MCF 10A (cell line): ENCODE measurements at regions of chr5 and their contacts with region 1.

Region 1: GRCh38 chr5:42950440-42951292 is 89.5 kb downstream of the ANXA2R start:
- DNase-seq: peak; percentile 98
- H3K4me3 Mint-ChIP-seq: peak overlapping the region; percentile 47
- H3K27ac Mint-ChIP-seq: peak overlapping the region; percentile 85
- H3K4me1 Mint-ChIP-seq: no peaks in the 10 kb centered on the region
- H3K27me3 Mint-ChIP-seq: no peaks in the 10 kb centered on the region
- CTCF ChIP-seq: no peak

Region 2: DNA sequence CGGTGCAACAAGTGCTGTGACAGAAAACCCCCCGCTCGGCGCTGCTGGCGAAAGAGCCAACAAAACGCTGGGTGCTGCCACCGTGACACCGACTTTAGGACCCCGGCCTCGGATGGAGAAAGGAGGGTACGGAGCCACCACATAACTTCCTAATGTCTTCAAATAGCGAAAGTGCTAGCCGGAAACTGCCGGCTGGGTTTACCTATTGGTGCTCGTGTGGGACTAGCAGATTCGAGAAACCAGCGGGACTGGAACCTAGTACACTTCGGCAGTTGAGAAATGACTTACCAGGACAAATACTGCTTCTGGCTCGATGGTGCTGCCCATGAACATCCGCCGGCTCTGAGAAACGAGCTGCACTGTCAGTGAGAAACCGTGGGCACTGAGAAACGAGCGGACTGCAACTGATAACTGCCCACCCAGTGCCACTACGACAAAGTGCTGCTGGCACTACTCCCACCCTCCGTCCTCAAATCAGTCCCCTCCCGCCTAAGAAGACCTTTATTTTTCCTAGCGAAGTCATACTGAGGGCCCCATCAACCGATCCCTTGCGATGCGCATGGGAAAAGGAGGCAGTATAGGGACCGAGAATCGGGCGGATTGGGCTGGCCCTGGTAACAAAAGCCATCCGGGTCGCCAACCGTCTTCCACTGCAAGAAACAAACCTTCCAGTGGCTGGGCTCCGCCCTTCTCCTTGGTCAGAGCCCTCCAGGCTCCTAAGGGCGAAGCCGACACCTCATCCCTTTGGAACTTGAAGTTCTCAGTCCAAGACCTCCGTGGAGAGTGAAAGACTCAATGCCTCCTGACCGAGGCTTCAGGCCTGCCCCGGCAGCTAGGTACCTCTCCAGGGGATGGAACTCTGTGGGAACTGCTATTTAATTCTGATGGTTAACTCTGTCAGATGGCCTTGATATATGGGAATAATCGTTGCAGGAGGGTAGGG is 116.4 kb after region 1 on chr5:
- CTCF ChIA-PET with region 1: interaction called, 3 read pairs
- POLR2A ChIA-PET with region 1: interaction called, 3 read pairs
- intact Hi-C with region 1: loop called (anchors 1 kb)
- DNase-seq: peak; percentile 91
- H3K4me3 Mint-ChIP-seq: peak overlapping the region; percentile 99
- H3K27ac Mint-ChIP-seq: peak overlapping the region; percentile 93
- H3K4me1 Mint-ChIP-seq: peaks cover 12% of the 10 kb centered on the region
- H3K27me3 Mint-ChIP-seq: no peaks in the 10 kb centered on the region
- CTCF ChIP-seq: no peak

Region 3: DNA sequence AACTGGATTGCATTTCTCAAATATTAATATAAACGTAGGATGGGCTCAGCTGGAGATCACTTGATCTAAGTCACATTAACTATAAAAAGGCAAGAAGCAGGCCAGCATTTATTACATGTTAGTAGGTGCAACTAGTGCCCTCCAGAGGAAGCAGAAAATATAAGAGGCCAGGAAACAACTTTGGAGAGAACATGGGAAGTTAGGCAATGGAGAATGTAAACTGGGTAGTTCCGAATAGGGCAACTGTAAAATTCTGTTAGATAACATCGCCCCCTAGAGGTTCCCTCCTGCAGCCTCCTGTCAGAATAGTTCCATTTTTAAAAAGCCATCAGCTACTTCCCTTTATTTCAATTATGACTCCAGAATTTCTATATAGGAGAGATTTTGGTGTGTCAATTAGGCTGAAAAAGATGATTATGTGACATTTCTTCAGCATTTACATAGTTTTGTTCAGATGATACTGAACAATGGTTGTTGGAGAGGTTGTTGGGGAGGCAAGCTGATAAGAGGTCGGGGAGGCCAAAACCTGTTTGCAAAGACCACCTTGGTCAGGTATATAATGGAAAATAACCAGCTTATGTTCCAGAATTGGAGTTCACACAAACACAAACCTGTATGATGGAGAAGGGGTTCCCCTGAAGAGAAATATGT is 439.1 kb after region 1 on chr5:
- CTCF ChIA-PET with region 1: no interaction called
- POLR2A ChIA-PET with region 1: no interaction called
- intact Hi-C with region 1: no loop called
- DNase-seq: peak; percentile 90
- H3K4me3 Mint-ChIP-seq: no peak overlapping the region
- H3K27ac Mint-ChIP-seq: no peak overlapping the region
- H3K4me1 Mint-ChIP-seq: no peaks in the 10 kb centered on the region
- H3K27me3 Mint-ChIP-seq: no peaks in the 10 kb centered on the region
- CTCF ChIP-seq: peak; percentile 78